HEK293 (cell line): ENCODE measurements at regions of chr3 and their contacts with region 1.

Region 1: GRCh38 chr3:37024092-37024491 is 30.8 kb downstream of the MLH1 start:
- H3K4me3 ChIP-seq: no peak overlapping the region
- H3K27ac ChIP-seq: no peak overlapping the region
- H3K4me1 ChIP-seq: no peaks in the 10 kb centered on the region
- CTCF ChIP-seq: no peak

Region 2: DNA sequence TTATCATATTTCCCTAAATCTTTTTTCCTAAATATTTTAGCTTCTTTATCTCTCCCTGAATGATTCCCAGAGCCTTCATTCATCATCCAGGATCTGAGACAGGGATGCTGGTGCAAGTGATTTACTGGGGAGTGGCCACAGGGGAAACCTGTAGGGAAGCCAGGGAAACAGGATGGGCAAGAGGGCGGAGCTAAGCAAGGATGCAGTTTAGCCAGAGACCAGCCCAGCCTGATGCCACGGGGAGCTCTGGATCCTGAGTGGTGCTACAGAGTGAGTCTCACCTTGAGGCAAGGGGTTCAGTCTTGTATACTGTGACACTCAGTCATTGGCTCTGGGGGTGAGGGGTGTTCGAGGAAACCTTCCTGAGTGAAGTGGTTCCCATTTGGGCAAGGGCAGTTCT is 190.0 kb after region 1 on chr3:
- CTCF ChIA-PET with region 1: interaction called, 10 read pairs
- POLR2A ChIA-PET with region 1: no interaction called
- H3K4me3 ChIP-seq: no peak overlapping the region
- H3K27ac ChIP-seq: no peak overlapping the region
- H3K4me1 ChIP-seq: no peaks in the 10 kb centered on the region
- CTCF ChIP-seq: no peak